OCI-LY7 (cell line): ENCODE measurements at regions of chr12 and their contacts with region 1.

Region 1: GRCh38 chr12:111546758-111547383 is 52.2 kb downstream of the ATXN2 start:
- DNase-seq: no peak
- H3K4me3 ChIP-seq: no peak overlapping the region
- H3K27ac ChIP-seq: no peak overlapping the region
- H3K4me1 ChIP-seq: no peaks in the 10 kb centered on the region
- CTCF ChIP-seq: no peak

Region 2: GRCh38 chr12:111046896-111047295 is 500.0 kb before region 1 on chr12:
- CTCF ChIA-PET with region 1: no interaction called
- POLR2A ChIA-PET with region 1: no interaction called
- intact Hi-C with region 1: no loop called
- DNase-seq: no peak
- H3K4me3 ChIP-seq: no peak overlapping the region
- H3K27ac ChIP-seq: no peak overlapping the region
- H3K4me1 ChIP-seq: no peaks in the 10 kb centered on the region
- CTCF ChIP-seq: no peak

Region 3: GRCh38 chr12:111529424-111530368 is 17.2 kb before region 1 on chr12:
- CTCF ChIA-PET with region 1: no interaction called
- POLR2A ChIA-PET with region 1: no interaction called
- intact Hi-C with region 1: no loop called
- DNase-seq: peak; percentile 77
- H3K4me3 ChIP-seq: no peak overlapping the region
- H3K27ac ChIP-seq: no peak overlapping the region
- H3K4me1 ChIP-seq: no peaks in the 10 kb centered on the region
- CTCF ChIP-seq: peak; percentile 93

Region 4: DNA sequence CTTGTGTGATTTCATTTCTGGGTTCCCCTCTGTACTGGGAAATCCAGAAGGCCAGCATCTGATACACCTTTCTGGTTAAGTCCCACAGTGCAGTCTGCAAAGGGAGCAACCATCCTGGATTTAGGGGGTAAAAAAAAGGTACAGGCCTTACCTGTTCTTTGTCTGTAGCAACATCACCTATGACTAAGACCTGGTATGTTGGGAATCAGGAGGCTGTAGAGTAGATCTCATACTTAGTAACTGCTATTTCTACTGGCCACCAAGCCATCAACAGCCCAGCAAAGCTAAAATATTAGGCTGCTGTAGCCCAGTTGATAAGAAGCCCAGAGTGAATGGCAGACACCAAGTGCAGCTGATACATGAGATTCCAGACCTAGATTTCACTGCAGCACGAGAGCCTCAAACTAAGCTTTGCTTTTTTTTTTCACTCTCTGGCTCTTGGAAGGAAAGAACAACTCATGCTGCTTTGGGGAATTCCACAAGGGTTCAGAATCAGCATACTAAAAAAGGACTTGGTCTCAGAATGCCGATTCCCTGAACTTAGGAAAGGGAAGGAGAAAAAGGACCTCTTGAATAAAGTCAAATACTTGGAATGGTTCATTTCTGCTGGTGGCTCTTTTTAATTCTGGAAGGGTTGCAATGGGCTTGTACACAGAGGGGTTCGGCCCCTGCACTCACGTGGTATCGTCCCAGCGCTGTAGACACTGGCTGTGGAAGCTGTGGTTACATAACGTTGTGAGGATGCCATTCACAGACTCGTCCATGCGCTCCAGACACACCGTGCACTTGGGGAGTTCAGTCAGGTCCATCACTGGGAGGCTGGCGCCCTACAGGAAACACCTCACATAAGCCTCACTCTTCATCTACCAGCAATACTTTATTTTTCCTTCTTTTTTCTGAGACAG is 118.3 kb after region 1 on chr12:
- CTCF ChIA-PET with region 1: no interaction called
- POLR2A ChIA-PET with region 1: no interaction called
- intact Hi-C with region 1: loop called (anchors 10 kb)
- DNase-seq: no peak
- H3K4me3 ChIP-seq: no peak overlapping the region
- H3K27ac ChIP-seq: no peak overlapping the region
- H3K4me1 ChIP-seq: no peaks in the 10 kb centered on the region
- CTCF ChIP-seq: no peak